Activated naive CD8-positive, alpha-beta T cell treated with anti-CD3 and anti-CD28 coated beads, Interleukin-2, amount 10 ng/mL, durations not matched to agents 7 days and 5 days (primary cell): ENCODE measurements at regions of chr20 and their contacts with region 1.

Region 1: GRCh38 chr20:32535953-32536823 is 48.9 kb downstream of the NOL4L start:
- DNase-seq: peak; percentile 88
- ATAC-seq: peak; percentile 55
- H3K4me3 Mint-ChIP-seq: peak overlapping the region; percentile 88
- H3K27ac Mint-ChIP-seq: peak overlapping the region; percentile 99
- H3K4me1 Mint-ChIP-seq: peaks cover 66% of the 10 kb centered on the region
- H3K27me3 Mint-ChIP-seq: no peaks in the 10 kb centered on the region

Region 2: GRCh38 chr20:32521780-32522525 is 14.2 kb before region 1 on chr20:
- POLR2A ChIA-PET with region 1: interaction called, 248 read pairs
- DNase-seq: peak; percentile 78
- ATAC-seq: peak; percentile 62
- H3K4me3 Mint-ChIP-seq: no peak overlapping the region
- H3K27ac Mint-ChIP-seq: peak overlapping the region; percentile 74
- H3K4me1 Mint-ChIP-seq: peaks cover 40% of the 10 kb centered on the region
- H3K27me3 Mint-ChIP-seq: no peaks in the 10 kb centered on the region

Region 3: DNA sequence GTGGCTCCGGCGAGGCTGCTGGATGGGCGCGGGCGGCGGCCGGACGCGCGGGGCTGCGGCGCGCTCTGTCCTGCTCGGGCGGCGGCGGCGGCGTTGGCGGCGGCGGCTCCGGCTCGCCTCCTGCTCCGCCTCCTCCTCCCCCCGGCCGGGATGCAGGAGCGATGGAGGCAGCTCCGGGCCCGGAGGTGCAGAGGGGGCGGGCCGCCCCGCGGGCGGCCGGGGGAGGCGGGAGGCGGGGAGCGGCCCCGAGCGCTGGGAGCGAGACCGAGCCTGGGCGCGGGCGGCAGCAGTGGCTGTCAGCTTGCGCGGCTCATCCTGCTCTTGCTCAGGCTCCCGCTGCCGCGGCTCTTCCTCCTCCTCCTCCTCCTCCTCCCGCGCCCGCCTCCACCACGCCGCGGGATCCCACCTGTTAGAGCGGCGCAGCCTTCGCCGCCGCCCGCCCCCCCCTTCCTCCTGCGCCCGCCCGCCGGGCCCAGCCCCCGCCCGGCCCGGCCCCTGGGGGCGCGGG is 48.9 kb after region 1 on chr20 and contains the start of gene NOL4L:
- POLR2A ChIA-PET with region 1: interaction called, 30 read pairs
- DNase-seq: peak; percentile 69
- ATAC-seq: peak; percentile 22
- H3K4me3 Mint-ChIP-seq: peak within 1 kb of the TSS; percentile 84
- H3K27ac Mint-ChIP-seq: peak within 1 kb of the TSS; percentile 84
- H3K4me1 Mint-ChIP-seq: peaks cover 27% of the 10 kb centered on the region
- H3K27me3 Mint-ChIP-seq: peaks cover 14% of the 10 kb centered on the region
- total RNA-seq, gene NOL4L: 39.1 to 41.1 TPM

Region 4: GRCh38 chr20:32638848-32639247 is 102.7 kb after region 1 on chr20:
- POLR2A ChIA-PET with region 1: no interaction called
- DNase-seq: no peak
- ATAC-seq: no peak
- H3K4me3 Mint-ChIP-seq: no peak overlapping the region
- H3K27ac Mint-ChIP-seq: no peak overlapping the region
- H3K4me1 Mint-ChIP-seq: peaks cover 1% of the 10 kb centered on the region
- H3K27me3 Mint-ChIP-seq: peaks cover 2% of the 10 kb centered on the region

Region 5: GRCh38 chr20:32652739-32653526 is 116.7 kb after region 1 on chr20:
- POLR2A ChIA-PET with region 1: interaction called, 11 read pairs
- DNase-seq: peak; percentile 91
- ATAC-seq: peak; percentile 98
- H3K4me3 Mint-ChIP-seq: peak overlapping the region; percentile 26
- H3K27ac Mint-ChIP-seq: peak overlapping the region; percentile 40
- H3K4me1 Mint-ChIP-seq: peaks cover 6% of the 10 kb centered on the region
- H3K27me3 Mint-ChIP-seq: peaks cover 3% of the 10 kb centered on the region